Psoas muscle (tissue), 8 donors: ENCODE measurements at regions of chr16 and their contacts with region 1.

Region 1: DNA sequence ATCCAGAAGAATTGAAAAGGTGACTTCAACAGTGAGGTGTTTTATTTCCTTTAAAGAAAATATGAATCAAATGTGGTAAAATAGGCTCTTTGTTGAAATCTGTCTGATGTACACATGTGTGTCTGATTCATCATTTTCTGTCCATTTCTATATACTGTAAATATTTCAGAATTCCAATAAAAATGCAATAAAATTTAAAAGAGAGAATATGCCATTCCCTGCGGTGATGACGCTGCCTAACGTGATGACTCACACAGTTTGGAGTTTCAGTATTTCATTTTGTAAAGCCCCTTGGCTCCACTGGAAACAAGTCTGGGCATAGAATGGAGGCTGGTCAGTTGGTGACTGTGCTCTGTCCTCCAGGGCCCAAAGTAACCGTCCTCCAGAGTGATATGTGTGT is 482.5 kb upstream of the CDH5 start:
- DNase-seq: no peak
- ATAC-seq: no peak
- H3K4me3 ChIP-seq: no peak overlapping the region
- H3K27ac ChIP-seq: no peak overlapping the region
- H3K4me1 ChIP-seq: no peaks in the 10 kb centered on the region
- H3K27me3 ChIP-seq: peaks cover 0 to 3% (median 0%) of the 10 kb centered on the region in 3 donors
- CTCF ChIP-seq: no peak

Region 2: DNA sequence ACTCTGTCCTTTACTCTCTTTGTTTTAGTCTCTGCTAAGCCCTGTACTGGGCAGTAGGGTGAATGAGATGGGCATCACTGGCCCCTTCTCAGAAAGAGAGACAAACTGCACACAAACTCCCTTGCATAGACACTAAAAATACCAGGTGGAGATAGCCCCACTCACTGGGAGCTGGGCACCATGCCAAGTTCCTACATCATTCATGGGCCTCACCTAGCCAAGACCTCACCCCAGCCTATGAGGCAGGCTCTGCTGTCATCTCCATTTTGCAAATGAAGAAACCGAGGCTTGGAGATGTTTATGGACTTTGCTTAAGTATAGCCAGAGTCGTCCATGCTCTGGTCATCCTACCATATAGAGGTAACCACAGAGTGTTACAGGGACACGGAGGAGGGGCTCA is 262.4 kb before region 1 on chr16:
- intact Hi-C with region 1: no loop called
- DNase-seq: no peak
- ATAC-seq: no peak
- H3K4me3 ChIP-seq: no peak overlapping the region
- H3K27ac ChIP-seq: no peak overlapping the region
- H3K4me1 ChIP-seq: no peaks in the 10 kb centered on the region
- H3K27me3 ChIP-seq: peaks cover 0 to 4% (median 0%) of the 10 kb centered on the region in 3 donors
- CTCF ChIP-seq: no peak

Region 3: GRCh38 chr16:65922923-65923322 is 38.9 kb after region 1 on chr16:
- intact Hi-C with region 1: loop called in 1 of 2 experiments (anchors 5 kb)
- DNase-seq: no peak
- ATAC-seq: no peak
- H3K4me3 ChIP-seq: no peak overlapping the region
- H3K27ac ChIP-seq: no peak overlapping the region
- H3K4me1 ChIP-seq: no peaks in the 10 kb centered on the region
- H3K27me3 ChIP-seq: peaks cover 0 to 2% (median 0%) of the 10 kb centered on the region in 3 donors
- CTCF ChIP-seq: no peak